ENCODE measurements at regions of chr9 and their contacts with region 1.

Region 1: DNA sequence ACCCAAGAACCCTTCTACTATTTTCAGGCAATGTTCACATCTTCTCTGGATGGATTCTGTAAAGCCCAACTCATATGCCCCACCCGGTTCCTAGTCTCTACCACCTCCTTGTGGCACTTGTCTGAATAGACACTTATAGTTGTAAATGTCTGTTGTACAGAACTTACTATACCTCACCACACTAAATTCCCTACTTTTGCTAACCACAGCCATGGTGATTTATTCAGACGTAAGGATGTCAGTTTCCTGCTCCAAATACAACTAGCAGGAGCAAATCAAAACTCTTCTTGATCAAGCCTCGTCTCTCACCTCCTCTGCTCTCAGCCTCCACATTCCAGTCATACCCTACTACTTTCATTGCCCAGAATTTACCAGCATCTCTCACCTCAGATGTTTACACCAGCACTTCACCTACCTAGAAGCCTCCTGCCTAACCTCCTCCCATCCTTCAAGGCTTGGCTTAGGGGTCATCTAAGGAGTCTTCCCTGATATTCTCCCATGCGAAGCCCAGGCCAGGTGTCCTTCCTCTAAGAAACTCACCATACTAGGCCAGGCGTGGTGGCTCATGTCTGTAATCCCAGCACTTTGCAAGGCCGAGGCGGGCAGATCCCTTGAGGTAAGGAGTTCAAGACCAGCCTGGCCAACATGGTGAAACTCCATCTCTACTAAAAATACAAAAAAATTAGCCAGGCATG is 75.5 kb downstream of the MAPKAP1 start:
- DNase-seq: peak; percentile 39
- H3K4me3 ChIP-seq: no peak overlapping the region
- H3K27ac ChIP-seq: no peak overlapping the region
- H3K4me1 ChIP-seq: peaks cover 57% of the 10 kb centered on the region
- CTCF ChIP-seq: peak; percentile 78

Region 2: GRCh38 chr9:125261501-125262293 is 369.8 kb before region 1 on chr9 and contains the start of gene GAPVD1:
- CTCF ChIA-PET with region 1: no interaction called
- POLR2A ChIA-PET with region 1: interaction called, 10 read pairs
- intact Hi-C with region 1: no loop called
- DNase-seq: peak; percentile 97
- H3K4me3 ChIP-seq: peak within 1 kb of the TSS; percentile 95
- H3K27ac ChIP-seq: peak within 1 kb of the TSS; percentile 47
- H3K4me1 ChIP-seq: peaks cover 28% of the 10 kb centered on the region
- CTCF ChIP-seq: peak; percentile 57
- total RNA-seq, gene GAPVD1: 29.6 and 36.0 TPM in 2 replicates

Region 3: GRCh38 chr9:125407974-125408900 is 223.3 kb before region 1 on chr9:
- CTCF ChIA-PET with region 1: no interaction called
- POLR2A ChIA-PET with region 1: interaction called, 3 read pairs
- intact Hi-C with region 1: loop called (anchors 5 kb)
- DNase-seq: peak; percentile 84
- H3K4me3 ChIP-seq: peak overlapping the region; percentile 60
- H3K27ac ChIP-seq: no peak overlapping the region
- H3K4me1 ChIP-seq: peaks cover 21% of the 10 kb centered on the region
- CTCF ChIP-seq: peak; percentile 83

Region 4: DNA sequence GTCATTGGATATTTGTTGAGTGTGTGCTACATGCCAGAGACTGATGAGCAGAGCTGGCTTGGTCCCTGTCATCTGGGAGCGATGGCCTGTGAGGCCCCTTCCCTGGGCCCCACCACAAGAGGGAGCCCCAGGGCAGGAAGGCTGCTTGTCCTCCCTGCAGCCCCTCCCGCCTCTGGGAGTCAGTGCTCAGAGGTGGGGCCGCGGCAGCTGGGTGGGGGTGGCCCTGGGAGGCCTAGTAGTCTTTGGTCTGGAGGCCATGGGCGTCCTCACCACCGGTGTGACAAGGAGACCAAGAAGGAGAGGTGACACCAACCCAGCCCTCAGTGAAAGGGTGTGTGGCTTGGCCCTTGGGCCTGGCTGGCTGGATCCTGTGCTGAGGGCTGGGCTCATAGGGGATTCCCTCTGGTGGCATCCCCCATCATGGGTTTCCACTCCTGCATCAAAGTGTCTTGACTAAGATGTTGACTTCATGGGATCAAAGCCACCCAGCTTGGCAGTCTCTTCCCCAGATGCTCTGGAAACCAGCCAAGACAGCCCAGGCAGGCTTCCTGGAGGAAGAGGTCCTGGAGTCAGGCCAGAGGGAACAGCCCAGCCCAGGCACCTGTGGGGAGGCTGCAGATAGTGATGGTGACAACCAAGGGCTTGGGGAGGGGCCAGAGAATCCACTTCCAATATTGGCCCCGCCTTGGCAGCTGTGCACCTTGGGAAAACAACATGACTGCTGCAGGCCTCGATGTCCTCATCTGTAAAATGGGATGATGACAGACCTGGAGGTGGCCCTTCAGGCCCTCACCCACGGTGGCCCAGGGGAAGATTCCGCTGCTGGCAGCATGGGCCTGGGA is 203.3 kb before region 1 on chr9:
- CTCF ChIA-PET with region 1: no interaction called
- POLR2A ChIA-PET with region 1: no interaction called
- intact Hi-C with region 1: loop called (anchors 5 kb)
- DNase-seq: peak; percentile 64
- H3K4me3 ChIP-seq: no peak overlapping the region
- H3K27ac ChIP-seq: no peak overlapping the region
- H3K4me1 ChIP-seq: no peaks in the 10 kb centered on the region
- CTCF ChIP-seq: peak; percentile 86

Region 5: DNA sequence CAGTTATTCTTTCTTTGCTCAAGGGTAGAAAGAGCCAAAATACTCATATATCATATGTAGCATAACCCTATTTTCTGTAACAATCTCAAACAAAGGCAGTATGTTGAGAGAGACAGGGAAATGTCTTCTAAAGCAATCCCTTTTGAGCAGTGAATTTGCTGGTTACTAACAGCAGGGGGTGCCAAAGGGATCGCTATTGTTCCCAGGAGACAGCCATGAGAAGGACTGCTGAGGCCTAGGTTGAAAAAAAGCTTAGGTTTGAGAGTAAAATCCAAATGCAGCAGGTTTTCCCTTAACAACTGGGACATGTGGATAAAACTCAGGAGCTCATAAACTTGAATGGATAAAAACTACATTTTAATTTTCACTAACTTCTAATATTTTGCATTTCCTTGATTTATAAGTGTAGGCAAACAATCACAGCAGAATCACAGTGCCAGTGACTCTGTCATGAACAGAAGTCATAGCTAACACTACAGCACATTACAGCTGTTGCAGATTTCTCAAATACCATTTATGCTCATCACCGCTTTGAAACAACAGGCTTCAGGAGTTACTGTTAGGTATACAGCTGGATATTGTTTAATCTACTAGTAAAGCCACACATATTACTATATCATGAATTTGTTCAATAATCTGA is 73.0 kb before region 1 on chr9:
- CTCF ChIA-PET with region 1: no interaction called
- POLR2A ChIA-PET with region 1: no interaction called
- intact Hi-C with region 1: loop called (anchors 5 kb)
- DNase-seq: peak; percentile 72
- H3K4me3 ChIP-seq: no peak overlapping the region
- H3K27ac ChIP-seq: no peak overlapping the region
- H3K4me1 ChIP-seq: peaks cover 9% of the 10 kb centered on the region
- CTCF ChIP-seq: peak; percentile 95